SK-N-SH (cell line): ENCODE measurements at regions of chr5 and their contacts with region 1.

Region 1: GRCh38 chr5:59390074-59390659 is 503.4 kb downstream of the PDE4D start:
- DNase-seq: no peak
- H3K4me3 ChIP-seq: no peak overlapping the region
- H3K27ac ChIP-seq: no peak overlapping the region
- H3K4me1 ChIP-seq: no peaks in the 10 kb centered on the region; a peak in 1 of 4 replicates
- H3K27me3 ChIP-seq: no peaks in the 10 kb centered on the region
- CTCF ChIP-seq: peak; percentile 88
- EP300 ChIP-seq: no peak
- RAD21 ChIP-seq: peak; percentile 78

Region 2: DNA sequence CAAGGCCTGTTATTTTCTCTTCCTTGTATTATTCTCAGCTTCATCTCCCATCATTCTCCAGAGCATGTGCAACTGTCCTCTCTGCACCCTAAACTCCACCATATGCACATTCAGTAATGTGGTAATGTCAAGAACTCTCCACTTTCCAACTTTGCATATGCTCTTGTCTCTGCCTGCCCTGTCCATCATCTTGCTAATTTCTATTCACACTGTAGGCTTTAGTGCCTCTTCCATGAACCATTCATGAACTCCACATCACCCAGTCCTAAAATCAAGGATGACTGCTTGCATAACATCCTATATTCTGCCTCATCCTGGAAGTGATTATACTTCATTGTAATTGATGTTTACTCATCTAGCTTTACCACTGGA is 148.6 kb after region 1 on chr5:
- CTCF ChIA-PET with region 1: no interaction called
- POLR2A ChIA-PET with region 1: no interaction called
- DNase-seq: no peak
- H3K4me3 ChIP-seq: no peak overlapping the region
- H3K27ac ChIP-seq: no peak overlapping the region
- H3K4me1 ChIP-seq: peaks cover 0 to 16% of the 10 kb centered on the region in 2 experiments; a peak in 2 of 4 replicates
- H3K27me3 ChIP-seq: no peaks in the 10 kb centered on the region
- CTCF ChIP-seq: no peak
- EP300 ChIP-seq: no peak
- RAD21 ChIP-seq: no peak

Region 3: GRCh38 chr5:59666440-59667068 is 276.4 kb after region 1 on chr5:
- CTCF ChIA-PET with region 1: interaction called, 70 read pairs
- POLR2A ChIA-PET with region 1: no interaction called
- DNase-seq: no peak
- H3K4me3 ChIP-seq: no peak overlapping the region
- H3K27ac ChIP-seq: peak overlapping the region in 1 of 2 experiments; percentile 29; a peak in 1 of 4 replicates
- H3K4me1 ChIP-seq: peaks cover 0 to 18% of the 10 kb centered on the region in 2 experiments; a peak in 2 of 4 replicates
- H3K27me3 ChIP-seq: no peaks in the 10 kb centered on the region
- CTCF ChIP-seq: no peak
- EP300 ChIP-seq: no peak
- RAD21 ChIP-seq: peak; percentile 46

Region 4: GRCh38 chr5:59673438-59674058 is 283.4 kb after region 1 on chr5:
- CTCF ChIA-PET with region 1: interaction called, 70 read pairs
- POLR2A ChIA-PET with region 1: no interaction called
- DNase-seq: peak; percentile 24
- H3K4me3 ChIP-seq: no peak overlapping the region; a peak in 1 of 4 replicates
- H3K27ac ChIP-seq: no peak overlapping the region
- H3K4me1 ChIP-seq: peaks cover 2 to 4% of the 10 kb centered on the region in 2 experiments; a peak in 3 of 4 replicates
- H3K27me3 ChIP-seq: no peaks in the 10 kb centered on the region
- CTCF ChIP-seq: peak; percentile 89
- EP300 ChIP-seq: no peak
- RAD21 ChIP-seq: peak; percentile 90

Region 5: DNA sequence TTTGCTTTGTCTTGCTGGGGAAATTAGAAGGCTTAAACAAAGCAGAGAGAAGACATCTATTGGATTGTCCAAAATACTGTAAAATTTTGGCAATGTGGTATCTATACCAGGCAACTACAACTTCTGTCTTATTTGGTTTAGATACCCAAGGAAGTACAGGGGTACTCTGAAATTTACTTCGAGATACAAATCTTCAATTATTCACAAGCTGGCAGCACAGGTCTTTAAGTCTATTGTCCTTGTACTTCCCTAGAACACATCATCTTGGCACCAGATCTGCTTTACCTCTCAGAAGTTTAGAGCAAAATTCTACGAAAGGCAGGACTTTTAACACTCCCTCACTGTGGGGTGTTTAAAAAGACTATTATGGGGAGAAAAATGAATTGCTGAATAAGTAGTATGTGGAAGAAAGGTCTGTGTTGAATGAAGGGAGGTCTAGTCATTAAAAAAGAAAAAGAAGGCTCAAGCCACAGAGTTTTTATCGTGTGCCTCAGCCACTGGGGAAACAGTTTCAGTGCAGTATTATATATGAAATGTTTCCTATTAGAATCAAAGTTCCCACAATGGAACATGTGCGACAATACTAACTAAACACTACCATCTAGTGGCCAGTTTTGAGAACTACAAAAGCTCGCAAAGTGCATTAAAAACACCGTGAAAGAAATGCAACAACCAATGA is 409.6 kb after region 1 on chr5:
- CTCF ChIA-PET with region 1: interaction called, 34 read pairs
- POLR2A ChIA-PET with region 1: no interaction called
- DNase-seq: peak; percentile 37
- H3K4me3 ChIP-seq: no peak overlapping the region; a peak in 1 of 4 replicates
- H3K27ac ChIP-seq: peak overlapping the region; percentile 46 to 74; a peak in 3 of 4 replicates
- H3K4me1 ChIP-seq: peaks cover 10 to 15% of the 10 kb centered on the region in 2 experiments
- H3K27me3 ChIP-seq: no peaks in the 10 kb centered on the region
- CTCF ChIP-seq: peak; percentile 81
- EP300 ChIP-seq: no peak
- RAD21 ChIP-seq: peak; percentile 97